ENCODE measurements at regions of chr20 and their contacts with region 1.

Region 1: DNA sequence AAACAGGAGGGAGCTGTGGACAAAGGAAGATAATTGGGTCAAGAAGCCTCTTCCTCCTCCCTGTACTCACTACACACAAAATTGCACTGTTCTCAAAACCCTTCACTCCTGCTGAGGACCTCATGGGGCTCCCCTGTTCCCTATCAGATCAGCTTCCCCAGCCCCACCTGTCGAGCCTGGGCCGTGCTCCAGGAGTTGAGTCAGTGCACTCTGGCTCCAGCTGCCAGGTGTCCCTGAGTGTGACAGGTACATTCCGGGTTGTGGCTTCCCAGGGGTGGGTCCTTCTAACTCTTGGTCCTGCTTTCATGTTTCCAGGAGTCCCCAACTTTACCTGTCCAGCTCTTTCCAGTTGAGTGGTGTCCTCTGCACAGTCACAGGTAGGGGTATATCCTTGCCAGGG is 8.4 kb downstream of the RAB5IF start:
- DNase-seq: no peak
- ATAC-seq: no peak
- H3K4me3 Mint-ChIP-seq: no peak overlapping the region
- H3K27ac Mint-ChIP-seq: no peak overlapping the region
- H3K4me1 Mint-ChIP-seq: no peaks in the 10 kb centered on the region
- H3K27me3 Mint-ChIP-seq: no peaks in the 10 kb centered on the region
- CTCF ChIP-seq: no peak

Region 2: DNA sequence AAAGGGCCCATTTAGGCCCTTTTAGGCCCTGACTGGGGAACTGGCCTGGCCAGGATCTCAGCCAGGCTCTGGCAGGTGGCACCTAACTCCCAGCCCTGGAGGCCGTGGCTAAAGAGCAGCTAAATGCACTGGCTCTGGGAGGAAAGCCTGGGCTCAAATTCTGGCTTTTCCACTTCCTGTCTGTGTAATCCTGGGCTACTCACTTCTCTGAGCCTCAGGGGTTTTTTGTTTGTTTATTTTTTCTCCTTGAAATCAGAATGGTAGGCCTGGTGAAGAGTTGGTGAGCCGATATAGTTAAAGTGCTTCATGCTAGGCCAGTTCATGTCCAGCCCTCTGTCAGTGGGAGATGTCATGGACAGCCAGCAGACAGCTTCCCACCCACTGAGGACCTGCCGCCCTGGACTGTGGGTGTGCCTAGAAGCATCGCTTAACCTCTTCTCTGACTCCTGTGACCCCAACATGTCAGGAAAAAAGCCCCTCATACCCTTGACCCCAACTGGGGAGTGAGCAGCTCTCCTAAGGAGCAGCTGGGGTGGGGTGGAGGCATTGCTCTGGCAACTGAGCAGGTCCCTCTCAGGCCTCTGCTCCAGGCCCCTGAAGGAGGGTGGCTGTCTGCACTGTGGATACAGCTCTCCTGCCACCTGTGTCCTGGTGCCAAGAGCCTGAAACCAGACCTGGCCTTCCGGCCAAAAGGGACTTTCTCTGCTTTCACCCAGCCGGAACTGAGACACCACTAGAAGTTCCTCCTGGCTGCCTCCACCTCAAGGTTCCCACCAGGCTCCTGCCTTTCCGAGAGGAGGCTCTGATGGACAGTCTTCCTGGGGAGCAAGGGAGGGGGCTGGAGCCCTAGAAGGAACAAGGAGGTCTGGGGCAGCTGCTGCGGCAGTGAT is 129.8 kb before region 1 on chr20:
- CTCF ChIA-PET with region 1: no interaction called
- POLR2A ChIA-PET with region 1: no interaction called
- intact Hi-C with region 1: no loop called
- DNase-seq: no peak
- ATAC-seq: no peak
- H3K4me3 Mint-ChIP-seq: no peak overlapping the region
- H3K27ac Mint-ChIP-seq: no peak overlapping the region
- H3K4me1 Mint-ChIP-seq: peaks cover 28% of the 10 kb centered on the region
- H3K27me3 Mint-ChIP-seq: no peaks in the 10 kb centered on the region
- CTCF ChIP-seq: no peak

Region 3: DNA sequence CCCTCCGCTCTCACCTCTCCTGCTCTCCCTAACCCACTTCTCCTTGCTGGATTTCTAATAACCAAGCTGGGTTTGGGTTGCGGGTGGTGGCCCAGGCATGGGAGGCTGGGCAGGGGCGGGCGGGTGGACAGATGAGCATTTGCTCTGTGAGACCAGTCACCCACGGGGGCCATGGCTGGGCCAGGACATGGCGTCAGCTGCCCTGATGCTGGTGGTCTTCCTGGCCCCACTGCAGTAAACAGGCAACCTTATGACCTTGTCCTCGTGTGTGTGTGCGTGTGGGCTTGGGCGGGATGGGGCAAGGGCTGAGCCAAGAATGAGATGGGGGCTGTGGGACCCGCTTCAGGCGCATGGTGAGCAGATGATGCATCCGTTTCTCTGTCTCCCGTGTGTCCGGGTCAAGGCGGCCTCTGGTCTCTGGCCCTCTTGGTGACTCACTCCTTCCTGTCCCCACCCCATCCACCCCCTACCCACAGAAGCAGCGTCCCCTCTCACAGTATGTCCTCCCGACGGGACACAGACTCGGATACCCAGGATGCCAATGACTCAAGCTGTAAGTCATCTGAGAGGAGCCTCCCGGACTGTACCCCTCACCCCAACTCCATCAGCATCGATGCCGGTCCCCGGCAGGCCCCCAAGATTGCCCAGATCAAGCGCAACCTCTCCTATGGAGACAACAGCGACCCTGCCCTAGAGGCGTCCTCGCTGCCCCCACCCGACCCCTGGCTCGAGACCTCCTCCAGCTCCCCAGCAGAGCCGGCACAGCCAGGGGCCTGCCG is 114.1 kb before region 1 on chr20:
- CTCF ChIA-PET with region 1: no interaction called
- POLR2A ChIA-PET with region 1: no interaction called
- intact Hi-C with region 1: no loop called
- DNase-seq: no peak
- ATAC-seq: no peak
- H3K4me3 Mint-ChIP-seq: no peak overlapping the region
- H3K27ac Mint-ChIP-seq: no peak overlapping the region
- H3K4me1 Mint-ChIP-seq: peaks cover 3% of the 10 kb centered on the region
- H3K27me3 Mint-ChIP-seq: no peaks in the 10 kb centered on the region
- CTCF ChIP-seq: no peak

Region 4: DNA sequence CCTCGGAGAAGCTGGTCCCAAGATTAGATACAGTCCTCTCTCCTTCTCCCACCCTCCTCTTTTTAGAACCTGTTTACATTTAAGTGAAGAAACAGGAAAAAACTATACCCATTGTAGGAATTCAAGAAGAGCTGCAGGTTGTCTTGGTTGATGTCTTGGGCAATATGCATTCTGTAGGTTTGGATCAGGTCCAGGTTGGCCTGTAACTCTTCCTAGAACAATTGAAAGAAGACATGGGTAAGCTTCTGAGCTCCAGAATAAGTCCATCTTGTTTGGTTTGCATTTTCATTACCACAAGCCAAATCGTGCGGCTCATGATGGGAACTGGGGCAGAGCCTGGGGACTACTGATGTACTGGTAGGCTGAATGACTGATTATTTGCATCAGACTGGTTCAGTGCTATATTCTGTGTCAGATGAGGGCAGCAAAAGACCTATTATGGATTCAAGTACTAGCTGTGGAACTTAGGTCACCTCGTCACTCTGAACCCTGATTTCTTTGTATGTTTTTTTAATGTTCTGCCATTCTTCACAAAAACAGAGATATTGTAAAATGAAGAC is 52.3 kb after region 1 on chr20:
- CTCF ChIA-PET with region 1: no interaction called
- POLR2A ChIA-PET with region 1: interaction called, 10 read pairs
- intact Hi-C with region 1: no loop called
- DNase-seq: no peak
- ATAC-seq: no peak
- H3K4me3 Mint-ChIP-seq: no peak overlapping the region
- H3K27ac Mint-ChIP-seq: no peak overlapping the region
- H3K4me1 Mint-ChIP-seq: no peaks in the 10 kb centered on the region
- H3K27me3 Mint-ChIP-seq: no peaks in the 10 kb centered on the region
- CTCF ChIP-seq: no peak

Region 5: DNA sequence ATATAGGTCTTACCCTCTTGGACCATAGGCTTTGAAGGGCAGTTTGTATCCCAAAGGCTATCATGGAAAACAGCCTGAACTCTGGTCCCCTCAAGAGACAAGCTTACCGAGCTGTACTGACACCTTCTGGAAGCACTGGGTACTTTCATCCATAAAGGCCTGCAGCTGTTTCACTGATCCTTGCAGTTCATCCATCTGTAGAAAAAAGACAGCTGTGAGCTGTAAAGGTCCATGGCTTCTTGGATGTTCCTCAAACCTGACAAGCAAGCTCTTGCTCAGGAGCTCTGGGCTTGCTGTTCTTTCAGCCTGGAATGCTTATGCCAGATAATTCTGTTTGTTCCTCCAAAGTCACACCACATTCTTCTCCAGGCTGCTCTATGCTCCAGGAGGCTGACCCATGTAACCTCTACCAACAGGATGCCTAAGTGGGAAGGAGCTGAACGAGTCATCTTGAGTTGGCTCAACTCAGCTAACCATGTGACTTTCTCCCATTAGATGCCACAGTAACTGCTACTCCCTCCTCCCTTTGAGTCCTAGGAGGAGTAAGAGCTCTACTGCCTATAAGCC is 140.8 kb after region 1 on chr20:
- CTCF ChIA-PET with region 1: interaction called, 17 read pairs
- POLR2A ChIA-PET with region 1: no interaction called
- intact Hi-C with region 1: loop called (anchors 1 kb)
- DNase-seq: no peak
- ATAC-seq: peak; percentile 60
- H3K4me3 Mint-ChIP-seq: no peak overlapping the region
- H3K27ac Mint-ChIP-seq: peak overlapping the region; percentile 61
- H3K4me1 Mint-ChIP-seq: peaks cover 33% of the 10 kb centered on the region
- H3K27me3 Mint-ChIP-seq: no peaks in the 10 kb centered on the region
- CTCF ChIP-seq: no peak

Region 6: DNA sequence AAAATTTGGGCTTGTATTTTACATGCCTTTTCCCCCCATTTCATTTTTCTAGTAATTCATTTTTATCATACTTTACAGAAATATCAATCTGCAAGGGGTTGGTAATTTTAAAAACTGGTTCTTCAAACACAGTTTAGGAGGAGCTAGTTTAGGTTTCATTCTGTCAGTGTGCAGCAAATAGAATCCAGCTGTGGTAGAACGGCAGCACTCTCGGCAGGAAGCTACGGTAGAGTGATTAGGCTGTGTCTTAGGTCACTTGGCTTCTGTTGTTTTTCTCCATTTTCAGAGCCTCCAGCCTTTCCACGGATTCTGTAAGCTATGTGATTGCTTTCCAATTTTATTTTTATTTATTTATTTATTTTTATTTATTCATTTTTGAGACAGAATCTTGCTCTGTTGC is 294.6 kb after region 1 on chr20:
- CTCF ChIA-PET with region 1: no interaction called
- POLR2A ChIA-PET with region 1: no interaction called
- intact Hi-C with region 1: no loop called
- DNase-seq: no peak
- ATAC-seq: peak; percentile 60
- H3K4me3 Mint-ChIP-seq: no peak overlapping the region
- H3K27ac Mint-ChIP-seq: no peak overlapping the region
- H3K4me1 Mint-ChIP-seq: peaks cover 9% of the 10 kb centered on the region
- H3K27me3 Mint-ChIP-seq: no peaks in the 10 kb centered on the region
- CTCF ChIP-seq: no peak

Measured in activated B cell treated with CpG ODN at 0.5 μM for 24 hours (primary cell).